Activated T-helper 2 cell treated with anti-CD3 and anti-CD28 coated beads, Interferon-gamma antibody, Interleukin-2, Interleukin-4, amounts not matched to agents 10 μg/mL and 5 μg/mL and 100 μg/mL, durations not matched to agents 14 hours and 24 hours and 36 hours (primary cell): ENCODE measurements at regions of chr1 and their contacts with region 1.

Region 1: DNA sequence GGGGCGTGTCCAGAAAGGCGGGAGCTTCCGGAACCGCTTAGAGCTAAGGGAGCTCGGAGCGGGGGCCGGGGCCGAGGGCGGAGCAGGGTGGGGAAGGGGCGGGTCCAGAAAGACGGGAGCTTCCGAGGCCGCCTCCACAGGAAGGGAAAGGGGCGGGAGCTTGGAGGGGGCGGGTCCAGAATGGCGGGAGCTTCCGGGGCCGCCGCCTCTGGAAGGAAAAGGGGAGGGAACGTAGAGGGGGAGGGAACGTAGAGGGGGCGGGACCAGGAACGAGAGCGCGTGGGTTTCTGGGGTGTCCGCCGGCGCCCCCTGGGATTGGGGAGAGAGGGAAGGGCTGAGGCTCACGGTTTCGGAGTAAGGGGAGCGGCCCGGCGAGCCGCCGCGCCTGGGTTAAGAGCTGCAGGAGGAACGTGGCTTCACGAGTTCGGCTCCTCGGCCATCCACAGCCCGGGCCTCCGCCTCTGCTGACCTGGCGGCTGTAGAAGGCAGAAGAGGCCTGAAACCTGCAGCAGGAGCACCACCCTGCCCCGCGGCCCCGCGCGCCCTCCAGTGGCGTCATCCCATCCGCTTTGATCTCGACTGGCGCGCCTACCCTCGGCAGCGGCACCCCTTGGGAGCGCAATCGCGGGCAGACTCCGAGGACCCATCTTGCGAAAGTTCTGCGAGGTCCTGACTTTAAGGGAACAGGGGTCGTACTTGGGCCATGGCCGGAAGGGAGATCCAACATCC is 22.9 kb upstream of the HPDL start:
- DNase-seq: peak; percentile 89
- H3K4me3 Mint-ChIP-seq: peak overlapping the region; percentile 91
- H3K27ac Mint-ChIP-seq: peak overlapping the region; percentile 95
- H3K4me1 Mint-ChIP-seq: peaks cover 31% of the 10 kb centered on the region
- H3K27me3 Mint-ChIP-seq: no peaks in the 10 kb centered on the region

Region 2: GRCh38 chr1:44730741-44731512 is 572.8 kb before region 1 on chr1 and contains the start of gene RNU5D-1:
- intact Hi-C with region 1: loop called (anchors 2 kb)
- DNase-seq: peak; percentile 88
- H3K4me3 Mint-ChIP-seq: peak within 1 kb of the TSS; percentile 70
- H3K27ac Mint-ChIP-seq: peak within 1 kb of the TSS; percentile 100
- H3K4me1 Mint-ChIP-seq: peaks cover 33% of the 10 kb centered on the region
- H3K27me3 Mint-ChIP-seq: no peaks in the 10 kb centered on the region
- total RNA-seq, gene RNU5D-1: not detected in 2 replicates

Region 3: GRCh38 chr1:45018599-45019230 is 285.0 kb before region 1 on chr1:
- intact Hi-C with region 1: loop called (anchors 1 kb)
- DNase-seq: peak; percentile 48
- H3K4me3 Mint-ChIP-seq: no peak overlapping the region
- H3K27ac Mint-ChIP-seq: no peak overlapping the region
- H3K4me1 Mint-ChIP-seq: peaks cover 12% of the 10 kb centered on the region
- H3K27me3 Mint-ChIP-seq: peaks cover 2% of the 10 kb centered on the region

Region 4: DNA sequence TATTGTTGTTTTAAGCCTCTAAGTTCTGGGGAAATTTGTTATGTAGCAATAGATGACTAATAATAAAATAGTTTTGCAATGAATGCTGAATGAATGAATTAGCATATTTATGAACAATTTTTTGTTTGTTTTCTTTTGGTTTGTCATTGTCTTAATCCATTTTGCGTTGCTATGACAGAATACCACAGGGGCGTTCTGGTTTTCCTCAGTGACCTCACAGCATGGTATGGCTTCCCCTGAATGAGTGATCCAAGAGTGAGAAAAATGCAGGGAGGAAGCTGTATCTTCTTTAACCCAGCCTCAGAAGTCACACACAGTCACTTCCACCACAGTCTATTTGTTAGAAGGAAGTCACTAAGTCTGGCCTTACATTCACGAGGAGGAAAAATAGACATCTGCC is 30.8 kb before region 1 on chr1:
- intact Hi-C with region 1: no loop called
- DNase-seq: no peak
- H3K4me3 Mint-ChIP-seq: no peak overlapping the region
- H3K27ac Mint-ChIP-seq: no peak overlapping the region
- H3K4me1 Mint-ChIP-seq: no peaks in the 10 kb centered on the region
- H3K27me3 Mint-ChIP-seq: peaks cover 4% of the 10 kb centered on the region

Region 5: GRCh38 chr1:45326627-45327623 is 23.2 kb after region 1 on chr1 and contains the start of gene HPDL:
- intact Hi-C with region 1: loop called (anchors 2 kb)
- DNase-seq: peak; percentile 44
- H3K4me3 Mint-ChIP-seq: peak within 1 kb of the TSS; percentile 80
- H3K27ac Mint-ChIP-seq: peak within 1 kb of the TSS; percentile 65
- H3K4me1 Mint-ChIP-seq: peaks cover 16% of the 10 kb centered on the region
- H3K27me3 Mint-ChIP-seq: no peaks in the 10 kb centered on the region
- total RNA-seq, gene HPDL: 26.8 and 29.0 TPM in 2 replicates

Region 6: GRCh38 chr1:45490626-45491486 is 187.1 kb after region 1 on chr1 and contains the start of gene TESK2:
- intact Hi-C with region 1: loop called (anchors 1 kb)
- DNase-seq: peak; percentile 97
- H3K4me3 Mint-ChIP-seq: no peak within 1 kb of the TSS
- H3K27ac Mint-ChIP-seq: no peak within 1 kb of the TSS
- H3K4me1 Mint-ChIP-seq: peaks cover 9% of the 10 kb centered on the region
- H3K27me3 Mint-ChIP-seq: peaks cover 9% of the 10 kb centered on the region
- total RNA-seq, gene TESK2: 2.3 and 2.9 TPM in 2 replicates